HEK293 (cell line): ENCODE measurements at regions of chr6 and their contacts with region 1.

Region 1: DNA sequence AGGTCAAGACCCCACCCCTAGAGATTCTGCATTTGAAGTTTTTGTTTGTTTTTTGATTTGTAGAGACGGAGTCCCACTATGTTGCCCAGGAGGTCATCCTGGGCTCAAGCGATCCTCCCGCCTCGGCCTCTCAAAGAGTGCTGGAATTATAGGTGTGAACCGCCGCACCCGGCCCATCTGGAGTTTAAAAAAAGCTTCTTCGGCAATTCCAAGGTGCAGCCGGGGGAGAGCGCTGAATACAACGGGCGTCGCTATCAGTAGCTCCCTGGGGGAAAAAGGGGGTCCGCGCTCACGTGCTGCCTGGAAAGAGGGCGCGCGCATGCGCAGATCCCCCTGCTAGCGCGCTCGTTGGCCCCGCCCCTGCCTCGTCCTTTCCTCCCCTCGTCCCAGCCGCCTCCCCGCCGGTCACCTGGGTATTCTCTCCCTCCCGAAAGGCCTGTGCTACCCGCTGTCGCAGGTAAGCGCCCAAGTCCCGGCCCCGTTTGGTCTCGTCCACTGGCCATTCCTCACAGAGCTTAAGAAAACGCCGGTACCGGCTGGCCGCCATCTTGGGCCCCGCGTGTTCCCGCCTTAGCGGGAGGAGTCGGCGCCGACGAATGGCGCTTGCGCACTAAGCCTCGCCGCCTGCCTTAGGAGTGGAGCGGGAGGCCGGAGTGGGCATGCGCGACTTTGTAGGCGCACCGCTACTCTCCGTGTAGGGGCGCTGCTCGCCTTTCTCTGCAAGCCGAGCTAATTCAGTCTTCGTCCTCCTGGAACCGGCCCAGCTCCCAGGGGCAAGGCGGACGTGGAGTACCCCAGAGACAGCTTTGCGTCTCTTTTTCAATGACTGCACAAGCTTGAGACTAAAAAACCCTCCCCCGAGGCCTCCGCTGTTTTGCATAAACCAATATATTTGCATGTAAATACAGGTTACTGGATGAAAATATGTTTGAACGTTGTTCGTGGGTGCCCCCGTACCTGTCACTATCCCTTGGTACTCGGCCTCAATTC is at the start of gene UQCC2:
- H3K4me3 ChIP-seq: peak within 1 kb of the TSS; percentile 89
- H3K27ac ChIP-seq: peak within 1 kb of the TSS; percentile 97
- H3K4me1 ChIP-seq: peaks cover 7% of the 10 kb centered on the region; the same call in 1 of the 2 replicates
- CTCF ChIP-seq: peak; percentile 81

Region 2: GRCh38 chr6:33552252-33552651 is 159.2 kb before region 1 on chr6:
- CTCF ChIA-PET with region 1: no interaction called
- POLR2A ChIA-PET with region 1: interaction called, 12 read pairs
- H3K4me3 ChIP-seq: no peak overlapping the region
- H3K27ac ChIP-seq: no peak overlapping the region
- H3K4me1 ChIP-seq: peaks cover 2% of the 10 kb centered on the region; the same call in 1 of the 2 replicates
- CTCF ChIP-seq: no peak

Region 3: DNA sequence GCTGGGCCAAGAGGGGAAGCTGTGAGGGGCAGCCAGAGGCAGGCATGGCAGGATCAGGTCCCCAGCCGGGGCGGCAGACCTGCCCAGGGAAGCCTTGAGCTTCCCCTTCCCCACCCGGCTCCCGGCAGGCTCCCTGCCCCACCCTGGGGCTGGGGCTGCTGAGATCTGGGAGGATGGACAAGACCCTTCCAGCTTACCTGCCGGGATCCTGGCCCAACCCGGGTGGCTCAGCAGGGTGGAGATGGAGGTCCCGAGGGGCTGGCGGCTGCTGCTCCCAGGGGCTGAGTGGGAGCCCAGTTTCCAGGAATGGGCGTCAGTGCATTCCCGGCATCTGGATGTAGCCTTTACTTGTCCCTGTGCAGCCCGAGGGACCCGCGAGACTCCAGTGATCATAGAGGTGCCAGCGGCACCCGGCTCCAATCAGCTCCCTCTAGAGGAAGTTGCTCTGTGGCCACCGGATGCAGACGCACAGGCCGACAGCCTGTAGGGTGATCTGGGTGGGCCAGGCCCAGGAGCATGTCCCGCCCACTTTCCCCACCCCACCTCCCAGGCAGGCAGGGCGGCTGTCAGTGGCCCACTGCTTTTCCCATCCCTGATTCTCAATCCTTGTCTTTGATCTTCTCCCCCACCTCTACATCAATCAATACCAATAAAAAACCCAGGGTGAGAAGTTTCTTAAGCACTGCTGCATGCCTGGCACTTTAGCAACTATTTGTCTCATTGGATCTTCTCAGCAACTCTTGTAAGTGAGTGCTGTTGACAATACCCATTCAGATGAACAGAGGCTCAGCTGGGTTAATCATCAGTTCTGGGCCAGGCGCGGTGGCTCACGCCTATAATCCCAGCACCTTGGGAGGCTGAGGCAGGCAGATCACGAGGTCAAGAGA is 131.4 kb before region 1 on chr6 and contains the start of gene BAK1:
- CTCF ChIA-PET with region 1: interaction called, 7 read pairs
- POLR2A ChIA-PET with region 1: interaction called, 14 read pairs
- H3K4me3 ChIP-seq: peak within 1 kb of the TSS; percentile 90
- H3K27ac ChIP-seq: peak within 1 kb of the TSS; percentile 71; the same call in 1 of the 2 replicates
- H3K4me1 ChIP-seq: no peaks in the 10 kb centered on the region; the same call in 1 of the 2 replicates
- CTCF ChIP-seq: peak; percentile 89

Region 4: GRCh38 chr6:33700391-33701050 is 10.9 kb before region 1 on chr6:
- CTCF ChIA-PET with region 1: interaction called, 75 read pairs
- POLR2A ChIA-PET with region 1: interaction called, 7 read pairs
- H3K4me3 ChIP-seq: no peak overlapping the region
- H3K27ac ChIP-seq: no peak overlapping the region
- H3K4me1 ChIP-seq: peaks cover 5% of the 10 kb centered on the region; the same call in 1 of the 2 replicates
- CTCF ChIP-seq: peak; percentile 67; the same call in 1 of the 2 replicates

Region 5: DNA sequence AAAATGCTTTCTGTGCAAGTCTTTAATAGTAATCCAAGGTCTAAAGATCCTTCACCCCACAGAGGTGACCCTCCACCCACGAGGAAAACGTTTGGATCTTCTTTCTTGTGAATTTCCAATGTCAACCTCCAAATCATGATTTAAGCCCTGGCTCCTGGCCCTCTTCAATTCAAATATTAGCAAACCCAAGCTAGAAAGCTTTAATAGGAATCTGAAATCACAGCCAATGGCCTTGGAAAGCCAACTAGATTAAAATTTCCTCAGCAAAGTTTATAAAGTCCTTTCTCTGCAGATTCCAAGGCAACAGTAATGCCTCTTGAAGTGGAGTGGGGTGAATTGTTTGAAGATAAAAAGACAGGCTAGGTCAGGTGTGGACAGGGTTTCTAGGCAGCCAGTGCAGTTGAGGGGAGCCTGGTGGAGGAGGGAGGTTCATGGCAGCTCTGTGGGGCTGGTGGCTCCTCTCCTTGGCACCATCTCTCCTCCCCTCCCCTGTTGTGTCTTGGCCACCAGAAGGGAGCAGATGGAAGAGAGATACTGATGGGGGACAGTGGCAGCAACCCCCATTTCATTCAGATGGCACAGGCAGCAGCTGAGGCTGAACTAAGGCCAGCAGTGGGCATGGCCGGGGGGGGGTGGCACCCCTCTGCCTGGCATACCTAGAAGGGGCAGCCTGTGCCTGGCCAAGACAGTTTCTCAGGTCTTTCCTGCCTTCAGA is 12.1 kb after region 1 on chr6:
- CTCF ChIA-PET with region 1: interaction called, 8 read pairs
- POLR2A ChIA-PET with region 1: interaction called, 13 read pairs
- H3K4me3 ChIP-seq: no peak overlapping the region
- H3K27ac ChIP-seq: no peak overlapping the region
- H3K4me1 ChIP-seq: no peaks in the 10 kb centered on the region
- CTCF ChIP-seq: no peak

Region 6: DNA sequence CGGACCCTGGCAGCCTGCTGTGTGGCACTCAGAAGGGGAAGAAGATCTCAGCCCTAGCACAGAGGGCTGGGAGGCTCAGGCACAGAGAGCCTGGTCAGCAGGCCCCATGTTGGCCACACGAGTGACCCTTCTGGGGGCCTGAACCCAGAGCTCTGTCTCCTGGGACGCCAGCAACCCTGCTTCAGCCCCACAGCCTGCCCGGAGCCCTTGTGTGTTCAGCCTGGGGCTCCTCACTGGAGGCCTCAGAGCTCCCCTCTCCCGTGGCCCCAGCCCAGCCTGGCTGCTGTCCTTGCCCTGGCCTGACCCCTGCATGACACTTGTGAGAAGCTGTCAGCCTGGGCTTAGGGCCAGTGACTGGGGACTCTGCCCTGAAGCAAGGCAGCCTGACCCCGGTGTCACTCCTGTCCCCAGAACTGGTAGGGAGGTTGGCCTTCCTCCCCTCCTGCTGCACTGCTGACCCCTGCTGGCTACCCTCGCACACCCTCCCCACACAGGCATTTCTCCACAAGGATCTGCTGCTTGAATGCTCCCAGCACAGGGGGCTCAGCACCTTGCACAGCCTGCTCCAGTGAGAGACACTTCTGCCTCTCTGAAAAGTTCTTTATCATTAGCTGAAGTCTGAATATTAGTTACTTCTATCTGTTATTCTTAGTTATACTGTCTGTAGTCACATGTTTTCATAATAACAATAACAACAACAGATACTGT is 50.6 kb after region 1 on chr6:
- CTCF ChIA-PET with region 1: interaction called, 33 read pairs
- POLR2A ChIA-PET with region 1: interaction called, 7 read pairs
- H3K4me3 ChIP-seq: no peak overlapping the region
- H3K27ac ChIP-seq: peak overlapping the region; percentile 37; the same call in 1 of the 2 replicates
- H3K4me1 ChIP-seq: peaks cover 16% of the 10 kb centered on the region
- CTCF ChIP-seq: peak; percentile 95

Region 7: DNA sequence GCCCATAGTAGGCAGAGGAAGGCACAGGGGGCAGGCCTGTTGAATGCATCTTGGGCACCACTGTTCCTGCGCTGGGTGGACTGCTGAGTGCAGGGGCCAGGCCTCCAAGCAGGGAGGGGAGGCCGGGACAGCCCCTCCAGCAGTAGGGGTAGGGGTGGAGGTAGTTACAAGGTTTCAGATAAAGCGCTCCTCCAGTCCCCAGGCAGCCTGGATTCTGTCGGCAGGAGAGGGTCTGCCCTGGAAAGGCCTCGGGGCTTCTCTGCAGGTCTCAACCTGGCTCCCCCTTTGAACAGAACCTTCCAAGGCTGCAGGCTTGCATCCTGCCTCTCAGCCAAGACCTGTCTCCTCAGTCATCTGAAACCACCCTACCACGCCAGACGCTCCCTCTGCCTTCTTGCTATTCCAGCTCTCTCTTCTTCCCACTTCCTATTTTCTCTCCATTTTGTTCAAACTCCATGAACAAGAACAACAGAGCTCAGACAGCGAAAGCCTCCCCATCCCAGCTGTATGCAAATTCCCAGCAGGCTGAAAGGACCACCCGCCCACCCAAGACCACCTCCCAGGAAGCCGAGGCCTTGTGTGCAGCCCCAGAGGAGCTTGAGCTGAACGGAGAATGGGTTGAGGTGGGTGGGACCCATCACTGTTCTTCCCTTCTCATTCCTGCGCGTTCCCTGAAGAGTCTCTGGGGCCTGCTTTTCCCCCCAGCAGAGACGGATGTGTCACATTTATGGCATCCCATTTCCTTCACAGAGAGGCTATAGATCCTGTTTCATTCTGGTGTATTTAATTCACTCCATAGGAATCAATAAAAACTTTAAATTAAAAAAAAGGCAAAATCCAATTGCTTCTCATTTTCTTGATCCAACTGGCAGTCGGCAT is 91.0 kb after region 1 on chr6:
- CTCF ChIA-PET with region 1: no interaction called
- POLR2A ChIA-PET with region 1: no interaction called
- H3K4me3 ChIP-seq: no peak overlapping the region
- H3K27ac ChIP-seq: no peak overlapping the region
- H3K4me1 ChIP-seq: no peaks in the 10 kb centered on the region
- CTCF ChIP-seq: no peak

Region 8: DNA sequence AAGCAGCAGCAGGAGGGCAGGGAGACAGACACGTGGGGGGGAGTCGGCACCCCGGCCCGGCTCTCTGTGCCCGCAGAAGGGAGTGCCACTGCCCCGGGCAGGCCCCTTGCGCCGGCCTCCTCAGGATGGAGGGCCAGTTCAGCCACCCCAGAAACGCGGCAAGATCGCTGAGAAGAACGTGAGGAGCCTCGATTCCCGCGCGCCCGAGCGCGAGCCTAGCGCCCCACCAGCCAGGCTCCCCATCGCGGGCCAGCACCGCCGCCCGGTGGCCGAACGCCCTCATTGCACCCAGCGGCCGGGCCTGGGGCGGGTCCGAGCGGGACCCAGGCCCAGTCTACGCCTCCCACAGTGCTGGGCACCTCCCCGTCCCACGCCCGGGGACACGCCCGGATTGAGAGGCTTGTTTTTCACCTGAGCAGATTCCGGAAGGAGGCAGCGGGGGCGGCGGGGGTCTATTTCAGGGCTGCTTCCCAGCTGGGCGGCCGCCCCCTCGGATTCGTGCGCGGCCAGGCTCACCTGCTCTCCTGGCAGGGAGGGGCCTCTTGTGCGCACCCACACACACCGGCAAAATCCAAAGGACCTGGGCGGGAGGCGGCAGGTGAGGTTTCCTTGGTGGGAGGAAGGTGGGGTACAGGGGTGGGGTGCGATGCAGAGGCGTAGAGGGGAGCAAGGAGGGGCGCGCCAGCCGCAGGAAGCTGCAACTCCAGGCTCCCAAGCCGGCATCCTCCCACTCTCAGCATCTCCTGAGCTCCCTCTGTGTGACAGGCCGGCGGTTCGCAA is 443.4 kb after region 1 on chr6:
- CTCF ChIA-PET with region 1: interaction called, 12 read pairs
- POLR2A ChIA-PET with region 1: no interaction called
- H3K4me3 ChIP-seq: peak overlapping the region; percentile 20
- H3K27ac ChIP-seq: no peak overlapping the region
- H3K4me1 ChIP-seq: no peaks in the 10 kb centered on the region
- CTCF ChIP-seq: peak; percentile 95